ENCODE measurements at regions of chr11 and their contacts with region 1.

Region 1: DNA sequence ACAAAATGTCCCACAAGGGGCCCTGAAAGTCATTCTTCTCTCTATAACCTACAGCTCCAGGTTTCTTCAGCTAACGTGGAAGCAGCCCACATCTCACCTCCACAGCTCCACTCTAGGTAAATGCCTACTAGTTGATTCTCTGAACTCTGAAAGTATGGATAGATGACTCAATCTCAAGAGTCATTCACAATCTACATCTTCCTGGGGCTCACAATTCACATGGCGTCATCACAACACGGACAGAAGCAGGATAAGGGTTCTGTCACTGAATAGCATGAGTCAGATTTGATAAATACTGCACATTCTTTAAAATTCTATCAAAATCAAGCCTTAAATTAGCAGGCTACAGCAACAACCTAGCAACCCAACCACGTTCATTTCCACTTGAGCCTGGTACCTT is 96.3 kb downstream of the PLEKHA7 start:
- DNase-seq: no peak
- H3K4me3 Mint-ChIP-seq: no peak overlapping the region
- H3K27ac Mint-ChIP-seq: no peak overlapping the region
- H3K4me1 Mint-ChIP-seq: peaks cover 12% of the 10 kb centered on the region
- H3K27me3 Mint-ChIP-seq: no peaks in the 10 kb centered on the region
- CTCF ChIP-seq: no peak

Region 2: GRCh38 chr11:16703795-16704194 is 214.1 kb before region 1 on chr11:
- CTCF ChIA-PET with region 1: no interaction called
- POLR2A ChIA-PET with region 1: no interaction called
- intact Hi-C with region 1: no loop called
- DNase-seq: no peak
- H3K4me3 Mint-ChIP-seq: no peak overlapping the region
- H3K27ac Mint-ChIP-seq: no peak overlapping the region
- H3K4me1 Mint-ChIP-seq: no peaks in the 10 kb centered on the region
- H3K27me3 Mint-ChIP-seq: peaks cover 11% of the 10 kb centered on the region
- CTCF ChIP-seq: no peak

Region 3: DNA sequence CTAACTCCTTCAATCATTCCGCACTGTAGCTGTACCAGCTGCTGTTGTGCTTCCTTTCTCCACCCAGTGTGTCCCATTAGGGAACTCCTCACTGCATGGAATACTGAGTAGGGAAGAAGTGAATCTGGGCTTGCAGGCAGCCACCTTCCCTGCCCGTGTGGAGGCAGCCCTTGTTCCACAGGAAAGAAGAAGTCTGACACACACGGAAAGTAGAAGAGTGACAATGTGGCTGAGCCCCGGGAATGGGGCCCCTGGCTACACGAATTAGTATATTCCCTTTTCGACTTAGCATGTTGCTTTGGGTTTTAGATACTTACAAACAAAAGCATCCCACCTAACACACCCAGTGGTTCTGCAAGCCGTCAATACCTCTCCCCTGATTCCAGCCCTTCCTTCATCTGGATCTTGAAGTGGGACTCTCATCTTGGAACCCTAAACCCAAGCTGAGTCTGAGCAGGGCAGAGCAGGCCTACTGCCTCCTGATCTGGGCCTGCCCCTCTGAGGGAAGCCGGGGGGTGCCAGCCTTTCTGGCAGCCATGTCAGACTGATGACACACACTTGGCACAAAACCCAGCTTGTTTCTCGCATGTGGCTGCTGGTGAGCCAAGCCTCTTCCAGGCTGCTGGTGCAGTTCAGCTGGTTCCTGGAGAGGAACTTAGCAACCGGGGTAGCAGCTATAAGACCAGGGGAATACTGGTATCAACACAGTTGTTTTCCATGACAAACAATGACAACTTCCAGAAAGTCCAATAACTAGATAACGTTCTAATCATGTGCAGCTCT is 107.9 kb before region 1 on chr11:
- CTCF ChIA-PET with region 1: no interaction called
- POLR2A ChIA-PET with region 1: no interaction called
- intact Hi-C with region 1: no loop called
- DNase-seq: peak; percentile 68
- H3K4me3 Mint-ChIP-seq: no peak overlapping the region
- H3K27ac Mint-ChIP-seq: no peak overlapping the region
- H3K4me1 Mint-ChIP-seq: peaks cover 5% of the 10 kb centered on the region
- H3K27me3 Mint-ChIP-seq: no peaks in the 10 kb centered on the region
- CTCF ChIP-seq: no peak

Region 4: GRCh38 chr11:16881074-16881709 is 36.7 kb before region 1 on chr11:
- CTCF ChIA-PET with region 1: interaction called, 15 read pairs
- POLR2A ChIA-PET with region 1: no interaction called
- intact Hi-C with region 1: no loop called
- DNase-seq: peak; percentile 84
- H3K4me3 Mint-ChIP-seq: peak overlapping the region; percentile 35
- H3K27ac Mint-ChIP-seq: no peak overlapping the region
- H3K4me1 Mint-ChIP-seq: peaks cover 19% of the 10 kb centered on the region
- H3K27me3 Mint-ChIP-seq: no peaks in the 10 kb centered on the region
- CTCF ChIP-seq: no peak

Region 5: GRCh38 chr11:16953663-16954062 is 35.7 kb after region 1 on chr11:
- CTCF ChIA-PET with region 1: no interaction called
- POLR2A ChIA-PET with region 1: no interaction called
- intact Hi-C with region 1: no loop called
- DNase-seq: no peak
- H3K4me3 Mint-ChIP-seq: no peak overlapping the region
- H3K27ac Mint-ChIP-seq: no peak overlapping the region
- H3K4me1 Mint-ChIP-seq: peaks cover 7% of the 10 kb centered on the region
- H3K27me3 Mint-ChIP-seq: no peaks in the 10 kb centered on the region
- CTCF ChIP-seq: no peak

Region 6: GRCh38 chr11:17287058-17287457 is 369.1 kb after region 1 on chr11:
- CTCF ChIA-PET with region 1: no interaction called
- POLR2A ChIA-PET with region 1: no interaction called
- intact Hi-C with region 1: no loop called
- DNase-seq: no peak
- H3K4me3 Mint-ChIP-seq: no peak overlapping the region
- H3K27ac Mint-ChIP-seq: no peak overlapping the region
- H3K4me1 Mint-ChIP-seq: no peaks in the 10 kb centered on the region
- H3K27me3 Mint-ChIP-seq: no peaks in the 10 kb centered on the region
- CTCF ChIP-seq: no peak